Ascending aorta (tissue), 2 donors: ENCODE measurements at regions of chr6 and their contacts with region 1.

Region 1: GRCh38 chr6:2037237-2037926 is 208.0 kb downstream of the GMDS start:
- DNase-seq: no peak
- H3K4me3 ChIP-seq: no peak overlapping the region
- H3K27ac ChIP-seq: no peak overlapping the region
- H3K4me1 ChIP-seq: no peaks in the 10 kb centered on the region
- H3K27me3 ChIP-seq: no peaks in the 10 kb centered on the region
- CTCF ChIP-seq: peak in 2 of 3 experiments; percentile 35 to 54

Region 2: GRCh38 chr6:1619673-1620503 is 417.5 kb before region 1 on chr6:
- intact Hi-C with region 1: loop called (anchors 5 kb)
- DNase-seq: no peak
- H3K4me3 ChIP-seq: peak overlapping the region; percentile 91 to 94
- H3K27ac ChIP-seq: peak overlapping the region; percentile 96 to 100
- H3K4me1 ChIP-seq: peaks cover 6 to 22% of the 10 kb centered on the region in 2 donors
- H3K27me3 ChIP-seq: no peaks in the 10 kb centered on the region
- CTCF ChIP-seq: no peak

Region 3: GRCh38 chr6:1856381-1856780 is 181.0 kb before region 1 on chr6:
- intact Hi-C with region 1: loop called (anchors 10 kb)
- DNase-seq: no peak
- H3K4me3 ChIP-seq: no peak overlapping the region
- H3K27ac ChIP-seq: no peak overlapping the region
- H3K4me1 ChIP-seq: peaks cover 0 to 20% of the 10 kb centered on the region in 2 donors
- H3K27me3 ChIP-seq: no peaks in the 10 kb centered on the region
- CTCF ChIP-seq: no peak